Activated CD8-positive, alpha-beta memory T cell treated with anti-CD3 and anti-CD28 coated beads, Interleukin-2, amount 10 ng/mL, durations not matched to agents 7 days and 5 days (primary cell): ENCODE measurements at regions of chr15 and their contacts with region 1.

Region 1: GRCh38 chr15:74768771-74769342 is 13.0 kb upstream of the CSK start:
- DNase-seq: peak; percentile 79
- ATAC-seq: peak; percentile 44
- H3K4me3 Mint-ChIP-seq: no peak overlapping the region
- H3K27ac Mint-ChIP-seq: peak overlapping the region; percentile 6
- H3K4me1 Mint-ChIP-seq: peaks cover 16% of the 10 kb centered on the region
- H3K27me3 Mint-ChIP-seq: peaks cover 2% of the 10 kb centered on the region

Region 2: DNA sequence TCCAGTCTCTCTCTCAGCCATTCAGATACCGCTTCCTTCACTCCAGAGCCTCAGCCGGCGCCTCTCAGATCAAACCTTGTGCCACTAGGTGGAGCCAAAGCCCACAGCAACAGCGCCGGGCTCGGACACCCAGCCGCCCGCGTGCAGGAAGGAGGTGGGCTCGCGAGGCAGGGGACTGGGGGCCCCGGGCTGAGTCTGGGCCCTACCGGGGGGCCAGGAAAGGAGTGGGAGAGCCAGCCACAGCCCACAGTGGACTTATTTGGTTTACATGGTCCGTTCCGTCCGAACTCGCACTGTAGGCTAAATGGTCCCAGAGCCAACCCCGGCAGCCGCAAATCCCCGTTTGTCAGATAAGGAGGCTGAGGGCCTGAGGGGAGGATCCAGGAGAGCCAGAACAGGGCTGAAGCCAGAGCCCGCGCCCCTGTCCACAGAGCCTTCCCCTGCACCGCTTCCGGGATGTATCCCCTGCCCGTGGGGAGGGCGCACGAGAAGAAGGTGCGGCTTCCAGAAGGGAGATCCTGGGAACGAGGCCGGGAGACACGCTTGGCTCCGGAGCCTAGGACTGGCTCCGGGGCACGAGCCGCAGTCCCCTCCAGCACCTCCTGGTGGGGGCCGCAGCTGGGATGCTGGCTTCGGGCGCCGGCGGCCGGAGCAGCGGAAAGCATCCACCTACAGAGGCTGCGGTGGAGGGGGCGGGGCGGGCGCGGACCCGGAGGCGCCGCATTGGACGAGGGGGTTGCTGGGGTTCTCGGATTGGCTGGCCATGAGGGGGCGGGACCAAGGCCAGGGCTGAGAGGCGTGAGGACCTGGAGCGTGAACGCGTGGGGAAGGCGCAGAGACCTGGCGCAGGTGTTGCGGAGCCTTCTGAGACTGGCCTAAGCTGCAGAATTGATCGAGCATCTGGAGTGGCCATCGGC is 394.9 kb before region 1 on chr15:
- CTCF ChIA-PET with region 1: interaction called, 33 read pairs
- DNase-seq: peak; percentile 97
- ATAC-seq: peak; percentile 96
- H3K4me3 Mint-ChIP-seq: peak overlapping the region; percentile 73
- H3K27ac Mint-ChIP-seq: peak overlapping the region; percentile 75
- H3K4me1 Mint-ChIP-seq: peaks cover 22% of the 10 kb centered on the region
- H3K27me3 Mint-ChIP-seq: peaks cover 33% of the 10 kb centered on the region

Region 3: DNA sequence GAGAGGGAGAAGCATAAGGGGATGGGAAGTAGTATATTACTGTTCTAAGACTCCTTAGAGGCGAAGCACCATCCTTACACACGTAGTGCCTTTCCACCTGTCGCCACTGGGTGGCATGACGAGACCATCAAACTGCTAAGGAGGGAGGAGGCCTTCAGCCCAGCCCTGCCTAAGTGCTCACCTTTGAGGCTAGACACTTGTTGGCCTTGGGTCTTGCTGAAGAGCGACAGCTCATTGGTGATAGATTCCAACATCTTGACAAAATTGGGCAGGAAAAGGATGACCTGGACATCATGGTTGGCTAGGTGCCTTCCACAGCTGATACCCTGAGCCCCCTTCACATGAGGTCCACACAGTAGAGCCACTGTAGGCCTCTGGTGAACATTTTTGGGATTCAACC is 133.6 kb before region 1 on chr15:
- CTCF ChIA-PET with region 1: interaction called, 401 read pairs
- DNase-seq: peak; percentile 84
- ATAC-seq: peak; percentile 90
- H3K4me3 Mint-ChIP-seq: no peak overlapping the region
- H3K27ac Mint-ChIP-seq: no peak overlapping the region
- H3K4me1 Mint-ChIP-seq: no peaks in the 10 kb centered on the region
- H3K27me3 Mint-ChIP-seq: no peaks in the 10 kb centered on the region

Region 4: GRCh38 chr15:74750751-74751150 is 18.1 kb before region 1 on chr15:
- CTCF ChIA-PET with region 1: interaction called, 16 read pairs
- DNase-seq: no peak
- ATAC-seq: no peak
- H3K4me3 Mint-ChIP-seq: no peak overlapping the region
- H3K27ac Mint-ChIP-seq: no peak overlapping the region
- H3K4me1 Mint-ChIP-seq: no peaks in the 10 kb centered on the region
- H3K27me3 Mint-ChIP-seq: no peaks in the 10 kb centered on the region

Region 5: GRCh38 chr15:74835307-74835823 is 66.5 kb after region 1 on chr15:
- CTCF ChIA-PET with region 1: interaction called, 34 read pairs
- DNase-seq: peak; percentile 59
- ATAC-seq: peak; percentile 62
- H3K4me3 Mint-ChIP-seq: no peak overlapping the region
- H3K27ac Mint-ChIP-seq: no peak overlapping the region
- H3K4me1 Mint-ChIP-seq: peaks cover 2% of the 10 kb centered on the region
- H3K27me3 Mint-ChIP-seq: no peaks in the 10 kb centered on the region

Region 6: GRCh38 chr15:74950078-74951000 is 181.5 kb after region 1 on chr15:
- CTCF ChIA-PET with region 1: interaction called, 101 read pairs
- DNase-seq: peak; percentile 86
- ATAC-seq: peak; percentile 80
- H3K4me3 Mint-ChIP-seq: no peak overlapping the region
- H3K27ac Mint-ChIP-seq: no peak overlapping the region
- H3K4me1 Mint-ChIP-seq: peaks cover 9% of the 10 kb centered on the region
- H3K27me3 Mint-ChIP-seq: no peaks in the 10 kb centered on the region